ENCODE measurements at regions of chr5 and their contacts with region 1.

Region 1: DNA sequence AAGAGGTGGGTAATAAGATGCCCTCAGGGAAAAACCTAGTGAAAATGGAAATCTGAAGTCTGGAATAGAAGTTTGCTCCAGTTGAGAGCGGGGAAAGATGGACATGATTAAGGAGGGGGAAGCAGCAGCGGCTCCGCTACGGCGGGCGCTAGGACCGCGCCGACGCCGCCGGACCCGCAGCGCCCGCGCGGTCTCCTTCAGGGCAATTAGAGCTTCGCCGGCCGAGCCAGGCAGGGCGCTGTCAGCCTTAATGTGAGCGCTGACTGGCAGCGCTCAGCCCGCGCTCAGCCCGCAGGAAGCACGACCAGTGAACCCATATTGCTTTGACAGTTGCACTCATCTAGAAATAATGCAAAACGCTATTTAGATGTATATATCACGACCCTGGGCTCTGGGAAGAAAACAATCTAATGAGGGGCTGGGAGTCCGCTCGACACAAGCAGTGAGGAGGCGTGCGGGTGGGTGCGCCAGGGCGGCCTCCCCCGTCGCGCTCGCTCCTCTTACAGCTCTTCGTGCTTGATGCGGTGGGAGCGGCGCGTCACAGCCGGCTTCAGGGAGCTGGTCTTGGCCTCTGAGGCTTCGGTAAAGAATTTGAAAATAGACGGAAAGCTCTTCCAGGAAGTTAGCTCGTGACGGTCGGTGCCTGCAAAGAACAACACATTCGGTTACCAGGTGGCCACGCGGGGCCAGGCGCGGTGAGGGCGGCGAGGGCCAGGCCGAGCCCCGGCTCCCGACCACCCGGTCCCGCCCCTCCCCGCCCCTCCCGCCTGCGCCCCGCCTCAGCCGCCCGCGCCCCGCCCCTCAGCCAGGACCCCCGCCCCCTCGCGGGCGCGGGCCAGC is 37.7 kb downstream of the NR2F1 start:
- DNase-seq: peak; percentile 68
- ATAC-seq: peak; percentile 83
- H3K4me3 ChIP-seq: peak overlapping the region; percentile 87
- H3K27ac ChIP-seq: peak overlapping the region; percentile 87
- H3K4me1 ChIP-seq: no peaks in the 10 kb centered on the region
- H3K27me3 ChIP-seq: no peaks in the 10 kb centered on the region
- CTCF ChIP-seq: peak; percentile 21; the same call in 1 of the 2 replicates
- POLR2A ChIP-seq: peak; percentile 29; the same call in 1 of the 2 replicates
- RAD21 ChIP-seq: peak; percentile 41

Region 2: DNA sequence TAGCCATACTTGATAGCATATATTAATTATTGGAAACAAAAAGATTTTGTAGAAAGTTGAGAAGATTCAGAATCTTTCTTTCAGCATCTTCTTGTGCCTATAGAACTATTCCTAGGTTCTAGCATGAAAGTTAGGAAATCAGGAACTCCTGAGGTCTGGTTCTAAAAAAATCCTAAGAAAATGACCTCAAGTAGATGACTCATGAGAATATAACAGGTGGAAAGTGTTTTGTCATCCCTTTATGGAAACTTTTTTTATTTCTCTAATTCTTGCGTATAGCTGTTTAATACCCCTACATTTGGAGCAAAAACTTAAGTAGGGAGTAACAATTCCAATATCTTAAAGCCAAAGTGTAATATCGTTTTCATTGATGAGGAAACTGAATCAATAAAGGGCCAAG is 613.8 kb before region 1 on chr5:
- CTCF ChIA-PET with region 1: no interaction called
- POLR2A ChIA-PET with region 1: no interaction called
- dilution Hi-C with region 1: no loop called
- in situ Hi-C with region 1: no loop called
- intact Hi-C with region 1: no loop called
- DNase-seq: peak; percentile 34
- ATAC-seq: no peak
- H3K4me3 ChIP-seq: no peak overlapping the region
- H3K27ac ChIP-seq: no peak overlapping the region
- H3K4me1 ChIP-seq: no peaks in the 10 kb centered on the region
- H3K27me3 ChIP-seq: no peaks in the 10 kb centered on the region
- CTCF ChIP-seq: no peak
- POLR2A ChIP-seq: no peak
- RAD21 ChIP-seq: no peak

Region 3: DNA sequence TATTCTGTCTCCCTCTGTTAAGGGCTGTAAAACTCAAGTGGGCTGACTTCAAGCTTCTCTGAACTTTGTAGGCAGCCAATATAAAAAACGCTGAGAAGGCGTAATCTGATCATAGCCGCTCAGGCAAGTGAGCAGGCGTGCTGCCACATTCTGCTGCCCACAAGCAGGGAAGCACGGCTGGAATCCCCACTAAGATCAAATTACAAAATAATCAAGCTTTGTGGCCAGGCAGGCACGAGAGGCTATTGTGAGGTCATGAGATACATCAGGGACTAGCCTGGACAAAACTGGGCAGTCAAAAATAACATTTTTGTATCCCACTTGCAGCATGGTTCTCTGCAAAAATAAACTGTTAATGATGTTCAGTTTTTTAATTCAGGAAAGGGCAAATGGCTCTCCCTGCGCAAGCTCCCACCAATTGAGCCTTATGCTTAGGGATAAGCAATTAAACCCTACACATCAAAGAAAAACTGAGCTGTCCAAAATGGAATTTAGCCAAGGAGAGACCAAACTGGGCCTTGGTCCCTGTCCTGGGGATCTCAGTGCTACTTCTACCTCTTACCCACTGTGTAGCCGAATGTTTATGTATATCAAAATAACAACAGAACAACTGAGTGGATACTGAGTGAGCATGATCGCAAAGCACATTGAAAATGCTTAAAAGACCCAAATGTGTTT is 56.8 kb after region 1 on chr5:
- CTCF ChIA-PET with region 1: interaction called, 3 read pairs
- POLR2A ChIA-PET with region 1: no interaction called
- dilution Hi-C with region 1: no loop called
- in situ Hi-C with region 1: no loop called
- intact Hi-C with region 1: loop called (anchors 5 kb)
- DNase-seq: peak; percentile 95
- ATAC-seq: peak; percentile 94
- H3K4me3 ChIP-seq: no peak overlapping the region
- H3K27ac ChIP-seq: peak overlapping the region; percentile 29; the same call in 1 of the 2 replicates
- H3K4me1 ChIP-seq: peaks cover 10% of the 10 kb centered on the region
- H3K27me3 ChIP-seq: no peaks in the 10 kb centered on the region
- CTCF ChIP-seq: no peak
- POLR2A ChIP-seq: no peak
- RAD21 ChIP-seq: no peak; the same call in 1 of the 2 replicates

Region 4: DNA sequence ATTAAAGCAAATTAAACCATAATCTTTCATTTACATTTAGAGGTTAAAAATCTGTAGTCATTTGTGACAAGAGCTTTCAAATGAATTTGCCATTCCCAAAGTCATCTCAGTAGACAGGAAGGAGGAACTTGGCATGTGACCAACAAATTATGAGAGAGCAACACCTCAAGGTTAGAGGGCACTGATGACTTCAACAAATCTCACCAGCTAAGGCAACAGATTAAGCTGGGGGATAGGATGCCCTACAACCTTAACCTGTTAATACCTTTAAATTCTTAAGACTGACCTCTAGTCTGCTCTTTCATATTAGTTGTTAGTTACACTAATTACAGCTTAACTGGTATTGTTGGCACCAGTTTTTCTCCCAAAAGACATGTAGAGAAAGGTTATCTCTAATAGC is 102.3 kb after region 1 on chr5:
- CTCF ChIA-PET with region 1: no interaction called
- POLR2A ChIA-PET with region 1: no interaction called
- dilution Hi-C with region 1: no loop called
- in situ Hi-C with region 1: no loop called
- intact Hi-C with region 1: loop called (anchors 5 kb)
- DNase-seq: peak; percentile 46
- ATAC-seq: no peak
- H3K4me3 ChIP-seq: no peak overlapping the region
- H3K27ac ChIP-seq: no peak overlapping the region
- H3K4me1 ChIP-seq: peaks cover 2% of the 10 kb centered on the region
- H3K27me3 ChIP-seq: no peaks in the 10 kb centered on the region
- CTCF ChIP-seq: no peak
- POLR2A ChIP-seq: no peak
- RAD21 ChIP-seq: no peak

Region 5: DNA sequence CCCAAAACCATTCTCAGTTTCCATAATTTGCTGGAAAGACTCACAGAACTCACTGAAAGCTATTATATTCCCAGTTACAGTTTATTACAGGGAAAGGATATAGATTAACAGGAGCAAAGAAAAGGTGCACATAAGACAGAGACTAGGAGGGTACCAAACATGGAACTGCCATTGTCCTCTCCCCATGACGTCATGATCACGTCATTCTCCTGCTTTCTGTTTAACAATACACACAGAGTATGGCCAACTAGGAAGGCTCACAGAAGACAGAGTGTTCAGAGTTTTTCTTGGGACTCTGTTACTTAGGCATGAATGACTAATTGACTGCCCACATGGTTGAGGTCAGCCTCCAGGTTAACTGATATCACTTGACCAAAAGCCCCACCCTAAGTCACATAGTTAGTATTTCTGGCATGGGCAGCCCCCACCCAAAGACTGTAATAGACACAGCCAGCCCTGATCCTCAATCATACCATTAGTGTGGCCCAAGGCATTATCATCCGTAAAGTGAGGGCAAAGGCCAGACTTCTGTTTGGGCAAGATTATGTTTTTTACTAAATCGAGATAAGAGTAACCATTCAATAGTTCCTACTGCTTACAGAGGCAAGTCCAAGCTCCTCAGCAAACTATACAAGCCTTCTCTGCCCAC is 474.2 kb after region 1 on chr5:
- CTCF ChIA-PET with region 1: no interaction called
- POLR2A ChIA-PET with region 1: no interaction called
- dilution Hi-C with region 1: no loop called
- in situ Hi-C with region 1: no loop called
- intact Hi-C with region 1: no loop called
- DNase-seq: no peak
- ATAC-seq: no peak
- H3K4me3 ChIP-seq: no peak overlapping the region
- H3K27ac ChIP-seq: no peak overlapping the region
- H3K4me1 ChIP-seq: no peaks in the 10 kb centered on the region
- H3K27me3 ChIP-seq: no peaks in the 10 kb centered on the region
- CTCF ChIP-seq: no peak
- POLR2A ChIP-seq: no peak
- RAD21 ChIP-seq: no peak

Region 6: DNA sequence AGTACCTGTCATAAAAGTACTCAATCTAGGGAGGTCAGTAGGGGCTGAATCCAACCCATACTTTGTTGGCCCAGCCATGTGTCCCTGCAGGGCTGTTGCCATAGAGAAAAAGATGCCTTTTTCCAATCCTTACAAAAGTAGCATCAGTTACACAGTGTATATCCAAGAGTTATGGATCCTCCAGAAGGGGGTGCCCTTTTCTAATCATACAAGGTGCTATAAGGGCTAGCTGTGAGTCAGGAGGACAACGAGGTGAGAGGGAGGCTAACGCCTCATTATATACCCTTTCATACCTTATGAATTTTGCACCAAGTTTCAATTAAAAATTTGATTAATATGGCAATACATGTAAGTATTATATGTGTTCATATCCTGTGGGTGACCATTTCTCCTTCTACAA is 992.9 kb after region 1 on chr5:
- CTCF ChIA-PET with region 1: no interaction called
- POLR2A ChIA-PET with region 1: no interaction called
- dilution Hi-C with region 1: no loop called
- in situ Hi-C with region 1: no loop called
- intact Hi-C with region 1: no loop called
- DNase-seq: peak; percentile 13
- ATAC-seq: no peak
- H3K4me3 ChIP-seq: no peak overlapping the region
- H3K27ac ChIP-seq: no peak overlapping the region
- H3K4me1 ChIP-seq: no peaks in the 10 kb centered on the region
- H3K27me3 ChIP-seq: no peaks in the 10 kb centered on the region
- CTCF ChIP-seq: peak; percentile 30; the same call in 1 of the 2 replicates
- POLR2A ChIP-seq: no peak
- RAD21 ChIP-seq: no peak

Measured in IMR-90 (cell line).